Activated CD8-positive, alpha-beta memory T cell treated with anti-CD3 and anti-CD28 coated beads, Interleukin-2, amount 10 ng/mL, durations not matched to agents 7 days and 5 days (primary cell): ENCODE measurements at regions of chr4 and their contacts with region 1.

Region 1: DNA sequence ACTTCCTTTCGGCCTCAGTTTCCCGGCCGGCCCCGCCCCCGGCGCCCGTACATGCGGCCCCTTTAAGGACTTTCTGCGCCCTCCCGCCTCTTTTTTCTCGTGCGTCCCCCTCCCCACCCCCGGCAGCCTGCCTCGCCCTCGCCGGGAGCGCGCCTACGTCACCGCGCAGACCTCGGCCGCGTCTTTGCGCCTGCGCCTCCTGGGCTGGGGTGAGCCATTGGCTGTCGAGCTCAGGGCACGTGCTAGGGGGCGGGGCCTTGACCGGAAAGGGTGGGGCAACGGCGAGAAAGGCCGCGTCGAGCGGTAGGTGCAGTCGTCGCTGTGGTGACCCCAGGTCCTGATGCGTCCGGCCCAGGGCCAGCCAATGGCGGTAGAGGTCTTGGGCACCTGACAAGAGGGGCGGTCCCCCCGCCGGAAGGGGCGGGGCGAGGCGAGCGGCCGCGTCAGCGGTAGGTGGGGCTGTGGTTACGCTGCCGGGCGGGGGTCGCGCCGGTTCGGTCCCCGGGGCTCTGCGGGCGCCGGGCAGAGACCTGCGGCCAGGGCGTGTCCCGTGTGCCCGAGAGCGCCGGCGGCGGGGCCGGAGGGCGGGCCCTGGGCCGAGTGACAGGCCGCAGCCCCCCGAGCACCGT is at the start of gene UVSSA:
- DNase-seq: peak; percentile 100
- ATAC-seq: peak; percentile 93
- H3K4me3 Mint-ChIP-seq: peak within 1 kb of the TSS; percentile 85
- H3K27ac Mint-ChIP-seq: peak within 1 kb of the TSS; percentile 96
- H3K4me1 Mint-ChIP-seq: peaks cover 36% of the 10 kb centered on the region
- H3K27me3 Mint-ChIP-seq: no peaks in the 10 kb centered on the region
- total RNA-seq, gene UVSSA: 18.2 to 25.2 TPM

Region 2: DNA sequence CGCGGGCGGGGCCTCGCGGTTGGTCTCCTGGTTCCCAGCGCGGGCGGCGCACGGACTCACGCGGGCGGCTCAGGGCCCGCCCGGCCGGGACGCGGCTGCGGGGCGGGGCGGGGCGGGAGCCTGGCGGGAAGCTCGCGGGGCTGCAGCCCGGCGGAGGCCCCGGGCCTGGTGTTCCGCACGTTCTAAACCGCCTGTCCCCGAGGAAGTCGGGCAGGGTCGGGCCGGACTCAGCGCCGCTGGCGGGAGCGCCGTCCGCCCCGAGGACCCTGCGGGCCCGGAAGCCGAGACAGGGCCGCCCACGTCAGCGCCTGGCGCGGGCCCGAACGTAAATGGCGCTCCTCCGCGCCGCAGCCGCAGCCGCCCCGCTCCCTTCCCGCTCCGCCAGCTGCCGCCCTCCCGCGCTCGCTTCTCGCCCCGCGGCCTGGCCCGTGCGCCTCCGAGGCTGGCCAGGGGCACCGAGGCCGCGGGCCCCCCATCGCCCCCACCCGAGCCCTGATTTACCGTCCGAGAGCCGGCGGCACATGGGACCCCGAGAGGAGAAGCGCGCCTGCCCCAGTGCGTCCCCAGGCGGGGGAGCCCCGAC is 97.7 kb before region 1 on chr4:
- CTCF ChIA-PET with region 1: interaction called, 19 read pairs
- DNase-seq: peak; percentile 83
- ATAC-seq: peak; percentile 66
- H3K4me3 Mint-ChIP-seq: peak overlapping the region; percentile 78
- H3K27ac Mint-ChIP-seq: peak overlapping the region; percentile 95
- H3K4me1 Mint-ChIP-seq: peaks cover 68% of the 10 kb centered on the region
- H3K27me3 Mint-ChIP-seq: no peaks in the 10 kb centered on the region

Region 3: GRCh38 chr4:1329408-1330371 is 17.2 kb before region 1 on chr4:
- CTCF ChIA-PET with region 1: interaction called, 11 read pairs
- DNase-seq: no peak
- ATAC-seq: peak; percentile 21
- H3K4me3 Mint-ChIP-seq: no peak overlapping the region
- H3K27ac Mint-ChIP-seq: peak overlapping the region; percentile 88
- H3K4me1 Mint-ChIP-seq: peaks cover 34% of the 10 kb centered on the region
- H3K27me3 Mint-ChIP-seq: no peaks in the 10 kb centered on the region

Region 4: GRCh38 chr4:1448602-1449420 is 101.9 kb after region 1 on chr4:
- CTCF ChIA-PET with region 1: no interaction called
- DNase-seq: peak; percentile 27
- ATAC-seq: no peak
- H3K4me3 Mint-ChIP-seq: no peak overlapping the region
- H3K27ac Mint-ChIP-seq: no peak overlapping the region
- H3K4me1 Mint-ChIP-seq: no peaks in the 10 kb centered on the region
- H3K27me3 Mint-ChIP-seq: no peaks in the 10 kb centered on the region